IMR-90 (cell line): ENCODE measurements at regions of chr16 and their contacts with region 1.

Region 1: DNA sequence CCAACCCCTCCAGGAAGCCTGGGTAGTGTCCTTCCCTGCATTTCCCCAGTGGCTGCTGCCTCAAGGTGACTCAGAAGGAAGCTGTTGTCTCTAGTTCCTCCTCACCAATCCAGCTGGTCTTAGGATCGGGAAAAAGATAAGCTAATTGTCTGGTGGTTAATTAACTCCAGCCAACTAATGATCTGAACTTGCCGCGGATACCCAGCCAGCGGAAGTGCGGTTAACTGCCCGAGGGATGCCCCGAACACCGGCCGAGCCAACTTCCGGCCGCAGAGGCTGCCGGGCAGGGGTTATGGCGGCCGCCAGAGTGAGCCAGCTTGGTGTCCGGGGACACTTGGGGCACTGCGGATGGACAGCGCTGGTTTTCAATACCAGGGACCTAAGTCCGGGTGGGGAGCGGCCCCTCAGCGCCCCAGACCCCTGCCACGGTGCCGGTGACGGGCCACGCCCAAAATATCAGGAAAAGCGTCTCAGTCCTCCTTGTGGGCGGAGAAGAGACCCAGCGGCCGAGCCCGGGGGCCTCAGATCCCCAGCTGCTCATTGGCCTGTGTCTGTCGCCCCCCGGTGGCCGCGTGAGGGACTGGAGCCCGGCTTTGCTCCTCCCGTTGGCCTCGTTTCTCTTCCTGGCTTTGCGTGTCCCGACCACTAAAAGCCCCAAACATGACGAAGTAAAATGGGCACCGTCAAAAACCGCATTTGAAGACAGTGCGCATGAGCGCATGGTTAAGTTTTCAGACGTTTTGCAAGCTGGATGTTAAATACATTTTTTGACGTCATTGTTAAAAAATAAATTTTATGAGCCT is 10.2 kb upstream of the PRSS22 start:
- DNase-seq: peak; percentile 93
- ATAC-seq: peak; percentile 99
- H3K4me3 ChIP-seq: peak overlapping the region; percentile 67
- H3K27ac ChIP-seq: peak overlapping the region; percentile 94
- H3K4me1 ChIP-seq: peaks cover 3% of the 10 kb centered on the region
- H3K27me3 ChIP-seq: no peaks in the 10 kb centered on the region
- CTCF ChIP-seq: peak; percentile 99
- POLR2A ChIP-seq: peak; percentile 67
- RAD21 ChIP-seq: peak; percentile 97

Region 2: DNA sequence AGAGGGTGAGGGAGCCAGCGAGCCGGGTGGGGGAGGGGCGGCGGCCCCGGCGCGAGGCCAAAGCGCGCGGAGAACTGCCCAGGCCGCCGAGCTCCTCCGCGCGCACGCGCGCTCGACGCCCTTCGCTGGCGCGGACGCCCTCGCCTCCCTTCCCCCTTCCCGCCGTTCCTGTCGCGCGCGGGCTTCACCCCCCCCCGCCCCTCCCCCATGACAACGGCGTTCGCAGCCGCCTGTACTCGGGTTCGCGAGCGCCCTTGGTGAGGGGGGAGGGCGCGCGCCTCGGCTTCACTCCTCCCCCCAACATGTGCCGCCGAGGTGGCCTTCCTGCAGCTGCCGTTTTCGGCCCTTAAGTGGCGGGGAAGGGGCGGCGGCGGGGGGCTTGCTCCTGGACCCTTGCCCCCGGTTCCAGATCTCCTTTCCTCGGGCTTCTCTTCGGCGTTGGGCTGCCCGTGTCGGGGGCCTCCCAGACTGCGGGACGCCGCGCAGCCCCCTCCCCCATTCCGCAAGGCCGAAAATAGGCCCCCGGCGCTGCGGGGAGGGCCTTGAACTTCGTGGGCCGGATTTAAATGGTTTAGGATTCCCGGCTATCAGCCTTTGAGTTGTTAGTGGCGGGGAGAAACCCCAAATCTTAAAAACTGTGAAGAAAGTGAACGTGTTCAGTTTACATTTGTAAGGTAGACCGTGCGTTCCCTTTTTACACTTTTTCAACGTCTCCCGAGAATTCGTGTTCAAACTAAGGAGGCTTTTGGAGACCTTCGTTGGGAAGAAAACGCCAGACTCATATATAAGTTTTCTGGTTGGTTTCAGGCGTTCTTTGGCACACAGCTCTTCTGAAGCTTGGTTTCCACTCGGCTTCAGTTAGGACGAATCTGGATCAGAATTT is 115.1 kb before region 1 on chr16:
- CTCF ChIA-PET with region 1: no interaction called
- POLR2A ChIA-PET with region 1: no interaction called
- dilution Hi-C with region 1: no loop called
- in situ Hi-C with region 1: no loop called
- intact Hi-C with region 1: loop called (anchors 1 kb)
- DNase-seq: peak; percentile 77
- ATAC-seq: peak; percentile 69
- H3K4me3 ChIP-seq: peak overlapping the region; percentile 88
- H3K27ac ChIP-seq: peak overlapping the region; percentile 99
- H3K4me1 ChIP-seq: peaks cover 9% of the 10 kb centered on the region
- H3K27me3 ChIP-seq: no peaks in the 10 kb centered on the region
- CTCF ChIP-seq: no peak
- POLR2A ChIP-seq: 0 out of 2 replicates have a peak, but pooled peaks have one; percentile 53
- RAD21 ChIP-seq: no peak

Region 3: DNA sequence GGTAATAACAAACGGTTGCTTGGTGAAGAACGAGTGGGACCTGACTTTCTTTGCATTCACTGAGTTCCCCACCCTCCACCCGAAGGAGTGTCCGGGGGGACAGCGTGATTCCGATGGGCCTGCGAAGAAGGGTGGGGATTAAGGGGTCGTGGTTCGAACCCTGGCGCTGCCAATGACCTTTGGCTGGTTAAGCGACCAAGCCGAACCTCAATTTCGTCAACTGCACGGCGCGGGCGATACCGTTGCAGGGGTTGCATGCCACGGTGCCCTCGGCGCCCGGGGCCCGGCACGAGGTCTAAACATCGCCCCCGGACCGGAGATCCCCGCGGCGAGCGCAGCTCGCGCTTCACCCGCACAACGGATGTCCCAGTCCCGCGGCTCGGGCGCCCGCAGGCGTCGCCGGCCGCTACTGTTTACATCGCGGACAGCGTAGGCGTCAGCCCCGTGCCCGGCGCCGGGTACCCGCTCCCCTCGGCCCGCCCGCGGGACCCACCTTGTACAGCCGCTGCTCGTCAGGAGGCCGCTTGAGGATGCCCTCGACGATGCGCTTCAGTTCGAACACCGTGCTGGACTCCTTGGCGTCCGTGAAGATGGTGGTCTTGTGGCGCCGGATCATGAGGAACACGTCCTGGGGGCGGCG is 91.6 kb before region 1 on chr16:
- CTCF ChIA-PET with region 1: interaction called, 3 read pairs
- POLR2A ChIA-PET with region 1: no interaction called
- dilution Hi-C with region 1: no loop called
- in situ Hi-C with region 1: no loop called
- intact Hi-C with region 1: loop called (anchors 1 kb)
- DNase-seq: no peak
- ATAC-seq: peak; percentile 38
- H3K4me3 ChIP-seq: peak overlapping the region; percentile 96
- H3K27ac ChIP-seq: peak overlapping the region; percentile 90
- H3K4me1 ChIP-seq: peaks cover 12% of the 10 kb centered on the region
- H3K27me3 ChIP-seq: no peaks in the 10 kb centered on the region
- CTCF ChIP-seq: no peak
- POLR2A ChIP-seq: no peak
- RAD21 ChIP-seq: no peak